IMR-90 (cell line): ENCODE measurements at regions of chr1 and their contacts with region 1.

Region 1: GRCh38 chr1:231240883-231241735 is at the start of gene GNPAT:
- DNase-seq: peak; percentile 78
- ATAC-seq: peak; percentile 98
- H3K4me3 ChIP-seq: peak within 1 kb of the TSS; percentile 71
- H3K27ac ChIP-seq: peak within 1 kb of the TSS; percentile 84
- H3K4me1 ChIP-seq: no peaks in the 10 kb centered on the region
- H3K27me3 ChIP-seq: no peaks in the 10 kb centered on the region
- CTCF ChIP-seq: no peak
- POLR2A ChIP-seq: peak; percentile 78; the same call in 1 of the 2 replicates
- RAD21 ChIP-seq: no peak
- total RNA-seq, gene GNPAT: 36.0 and 43.9 TPM in 2 replicates

Region 2: DNA sequence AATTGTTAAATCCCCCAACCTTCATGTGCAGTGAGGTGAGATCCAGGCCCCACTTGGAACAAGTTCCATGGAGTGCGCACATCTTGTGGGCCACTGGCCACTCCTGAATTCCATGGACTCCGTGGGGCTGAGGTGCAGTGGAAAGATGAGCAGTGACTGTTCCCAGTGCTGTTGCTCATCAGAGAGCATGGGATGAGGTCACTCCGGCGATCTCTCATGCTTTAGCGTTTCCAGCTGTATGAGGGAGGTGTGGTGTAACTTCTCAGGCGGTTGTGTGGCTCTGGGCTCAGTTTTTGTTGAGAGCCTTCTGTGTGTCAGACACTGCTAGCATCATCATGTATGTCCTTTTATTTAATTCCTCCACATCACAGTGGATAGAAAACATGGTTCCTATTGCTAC is 1077.9 kb before region 1 on chr1:
- CTCF ChIA-PET with region 1: no interaction called
- POLR2A ChIA-PET with region 1: no interaction called
- dilution Hi-C with region 1: no loop called
- in situ Hi-C with region 1: no loop called
- intact Hi-C with region 1: no loop called
- DNase-seq: peak; percentile 87
- ATAC-seq: peak; percentile 45; the same call in 1 of the 2 replicates
- H3K4me3 ChIP-seq: no peak overlapping the region
- H3K27ac ChIP-seq: no peak overlapping the region
- H3K4me1 ChIP-seq: peaks cover 13% of the 10 kb centered on the region
- H3K27me3 ChIP-seq: no peaks in the 10 kb centered on the region
- CTCF ChIP-seq: no peak
- POLR2A ChIP-seq: no peak
- RAD21 ChIP-seq: no peak

Region 3: GRCh38 chr1:231335663-231336602 is 94.8 kb after region 1 on chr1:
- CTCF ChIA-PET with region 1: no interaction called
- POLR2A ChIA-PET with region 1: no interaction called
- dilution Hi-C with region 1: no loop called
- in situ Hi-C with region 1: no loop called
- intact Hi-C with region 1: loop called (anchors 2 kb)
- DNase-seq: no peak
- ATAC-seq: no peak
- H3K4me3 ChIP-seq: peak overlapping the region; percentile 75
- H3K27ac ChIP-seq: no peak overlapping the region
- H3K4me1 ChIP-seq: peaks cover 7% of the 10 kb centered on the region
- H3K27me3 ChIP-seq: no peaks in the 10 kb centered on the region
- CTCF ChIP-seq: no peak
- POLR2A ChIP-seq: no peak
- RAD21 ChIP-seq: no peak

Region 4: DNA sequence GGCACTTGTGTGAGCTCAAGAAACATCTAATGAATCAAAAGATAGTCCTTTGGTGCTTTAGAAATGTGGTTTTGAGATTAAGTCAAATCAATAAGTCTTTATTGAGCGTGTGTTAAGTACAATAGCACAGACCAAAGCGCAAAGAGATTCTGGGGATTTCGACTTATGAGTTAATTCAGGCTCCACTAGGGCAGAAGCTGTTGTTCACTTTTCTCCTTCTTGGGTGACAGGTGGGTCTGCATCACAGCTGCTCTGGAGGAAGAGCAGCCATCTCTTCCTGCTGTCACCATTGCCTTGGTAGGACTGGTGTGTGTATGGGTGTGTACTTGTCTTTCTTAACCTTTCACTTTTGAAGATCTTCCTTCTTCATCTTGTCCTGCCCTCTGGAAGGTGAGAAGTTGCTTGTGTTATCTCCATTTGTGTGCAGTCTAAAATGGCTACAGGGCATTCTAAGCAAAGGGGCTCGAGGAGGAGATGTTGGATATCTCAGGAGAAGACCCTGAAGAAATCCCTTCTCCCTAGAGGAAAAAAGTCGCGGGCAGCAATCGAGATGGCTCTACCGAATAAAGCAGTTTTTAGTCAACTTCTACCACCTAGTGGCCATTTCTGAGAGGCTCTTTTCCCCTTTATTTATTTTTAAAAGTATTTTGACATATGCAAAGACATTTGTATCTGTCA is 362.6 kb after region 1 on chr1:
- CTCF ChIA-PET with region 1: no interaction called
- POLR2A ChIA-PET with region 1: no interaction called
- dilution Hi-C with region 1: no loop called
- in situ Hi-C with region 1: no loop called
- intact Hi-C with region 1: loop called (anchors 1 kb)
- DNase-seq: peak; percentile 54
- ATAC-seq: peak; percentile 70
- H3K4me3 ChIP-seq: peak overlapping the region; percentile 76
- H3K27ac ChIP-seq: no peak overlapping the region
- H3K4me1 ChIP-seq: peaks cover 4% of the 10 kb centered on the region; the same call in 1 of the 2 replicates
- H3K27me3 ChIP-seq: no peaks in the 10 kb centered on the region
- CTCF ChIP-seq: peak; percentile 86
- POLR2A ChIP-seq: no peak
- RAD21 ChIP-seq: peak; percentile 76